Body of pancreas (tissue), 4 donors: ENCODE measurements at regions of chr11 and their contacts with region 1.

Region 1: GRCh38 chr11:121591405-121592033 is 138.8 kb upstream of the SORL1-AS1 start:
- DNase-seq: peak; percentile 75 to 84 (median 78)
- ATAC-seq: peak; percentile 82
- H3K4me3 ChIP-seq: no peak overlapping the region
- H3K27ac ChIP-seq: no peak overlapping the region
- H3K4me1 ChIP-seq: no peaks in the 10 kb centered on the region
- H3K27me3 ChIP-seq: no peaks in the 10 kb centered on the region
- CTCF ChIP-seq: peak; percentile 67 to 90 (median 86)
- POLR2A ChIP-seq: no peak

Region 2: DNA sequence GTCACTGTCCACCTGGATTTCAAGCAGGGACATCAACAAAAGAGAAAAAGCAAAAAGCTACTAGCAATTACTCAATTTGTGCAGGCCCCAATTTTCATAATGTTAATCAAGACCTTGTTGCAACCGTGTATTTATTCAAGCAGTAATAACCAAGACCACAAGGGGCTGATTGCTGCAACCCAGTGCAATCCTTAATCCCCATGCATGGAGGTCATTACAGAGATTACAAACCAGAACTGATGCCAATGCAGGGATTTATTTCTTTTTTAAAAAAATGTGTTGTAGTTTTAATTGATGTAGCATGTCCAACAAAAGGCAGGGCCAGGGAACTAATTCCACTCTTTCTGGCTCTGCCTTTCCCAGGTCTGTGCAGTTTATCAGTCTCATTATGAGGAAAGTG is 472.1 kb before region 1 on chr11:
- intact Hi-C with region 1: no loop called
- DNase-seq: no peak
- ATAC-seq: no peak
- H3K4me3 ChIP-seq: no peak overlapping the region
- H3K27ac ChIP-seq: no peak overlapping the region
- H3K4me1 ChIP-seq: no peaks in the 10 kb centered on the region
- H3K27me3 ChIP-seq: no peaks in the 10 kb centered on the region
- CTCF ChIP-seq: no peak
- POLR2A ChIP-seq: no peak

Region 3: DNA sequence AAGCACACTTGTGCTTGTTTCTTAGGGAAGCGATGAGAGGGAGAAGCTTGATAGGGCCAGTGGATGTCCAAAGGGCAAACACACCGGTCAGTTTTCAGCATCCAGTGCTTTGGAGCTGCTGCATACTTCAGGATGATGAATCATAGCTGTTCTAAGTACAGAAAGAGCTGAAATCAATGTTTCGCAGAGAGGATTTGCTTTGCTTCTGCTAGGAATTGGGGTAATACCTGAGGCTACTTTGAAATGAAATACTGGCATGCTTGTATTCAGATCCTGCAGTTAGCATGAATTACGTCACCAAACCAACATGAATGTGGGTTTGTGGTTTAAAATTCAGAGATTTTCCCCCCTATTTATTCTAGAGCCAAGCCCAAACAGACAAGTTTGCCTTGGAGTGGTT is 340.7 kb before region 1 on chr11:
- intact Hi-C with region 1: loop called (anchors 5 kb)
- DNase-seq: no peak
- ATAC-seq: no peak
- H3K4me3 ChIP-seq: no peak overlapping the region
- H3K27ac ChIP-seq: no peak overlapping the region
- H3K4me1 ChIP-seq: no peaks in the 10 kb centered on the region
- H3K27me3 ChIP-seq: no peaks in the 10 kb centered on the region
- CTCF ChIP-seq: no peak
- POLR2A ChIP-seq: no peak

Region 4: GRCh38 chr11:121318848-121319834 is 272.4 kb before region 1 on chr11:
- intact Hi-C with region 1: loop called (anchors 5 kb)
- DNase-seq: peak in 3 of 4 donors; percentile 13 to 40 (median 13)
- ATAC-seq: peak; percentile 56
- H3K4me3 ChIP-seq: no peak overlapping the region
- H3K27ac ChIP-seq: no peak overlapping the region
- H3K4me1 ChIP-seq: no peaks in the 10 kb centered on the region
- H3K27me3 ChIP-seq: no peaks in the 10 kb centered on the region
- CTCF ChIP-seq: peak; percentile 31 to 84 (median 68)
- POLR2A ChIP-seq: no peak

Region 5: GRCh38 chr11:121426476-121427399 is 164.8 kb before region 1 on chr11:
- intact Hi-C with region 1: no loop called
- DNase-seq: peak in 3 of 4 donors; percentile 22 to 45 (median 26)
- ATAC-seq: peak; percentile 63
- H3K4me3 ChIP-seq: no peak overlapping the region
- H3K27ac ChIP-seq: no peak overlapping the region
- H3K4me1 ChIP-seq: no peaks in the 10 kb centered on the region
- H3K27me3 ChIP-seq: no peaks in the 10 kb centered on the region
- CTCF ChIP-seq: peak in 1 of 7 experiments; percentile 15
- POLR2A ChIP-seq: no peak